PC-3 (cell line): ENCODE measurements at regions of chr14 and their contacts with region 1.

Region 1: DNA sequence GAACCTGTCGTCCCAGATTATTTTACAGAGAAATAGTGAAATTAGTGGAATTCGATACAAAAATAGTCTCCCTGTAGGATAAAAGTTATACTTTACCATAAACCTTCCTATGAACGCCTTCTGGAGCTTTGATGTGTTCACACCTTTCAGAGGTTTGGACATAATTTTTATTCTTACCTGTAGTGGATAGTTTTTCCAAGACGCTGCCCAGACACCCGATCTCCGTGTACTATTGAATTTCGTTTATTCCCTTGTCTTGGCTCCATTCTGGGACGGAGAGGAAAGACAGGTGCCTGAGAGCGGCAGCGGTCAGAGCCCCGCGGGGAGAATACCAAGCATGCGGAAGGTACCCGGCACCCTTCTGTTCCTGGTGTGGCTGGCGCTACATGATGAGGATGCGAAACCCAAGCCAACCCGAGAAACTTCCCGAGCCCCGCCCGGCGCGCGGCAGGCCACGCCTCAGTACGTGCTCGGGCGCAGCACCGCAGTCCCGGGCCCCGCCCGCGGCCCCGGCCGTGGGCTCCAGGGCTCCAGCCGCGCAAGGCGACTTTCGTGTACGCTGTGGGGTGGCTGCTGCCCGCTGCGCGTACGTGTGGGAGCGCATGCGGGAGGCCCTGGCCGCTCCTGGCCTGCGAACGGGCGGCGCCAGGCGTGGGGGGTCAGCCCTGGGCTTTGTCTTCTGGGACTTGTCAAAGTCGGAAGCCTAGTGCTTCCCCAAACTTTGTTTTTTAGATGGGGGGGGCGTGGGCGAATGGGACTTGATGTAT is 11.3 kb upstream of the SNAPC1 start:
- DNase-seq: peak; percentile 99
- ATAC-seq: peak; percentile 79
- H3K4me3 ChIP-seq: peak overlapping the region; percentile 72
- H3K27ac ChIP-seq: peak overlapping the region; percentile 55
- H3K4me1 ChIP-seq: peaks cover 79% of the 10 kb centered on the region
- H3K27me3 ChIP-seq: no peaks in the 10 kb centered on the region
- CTCF ChIP-seq: no peak

Region 2: DNA sequence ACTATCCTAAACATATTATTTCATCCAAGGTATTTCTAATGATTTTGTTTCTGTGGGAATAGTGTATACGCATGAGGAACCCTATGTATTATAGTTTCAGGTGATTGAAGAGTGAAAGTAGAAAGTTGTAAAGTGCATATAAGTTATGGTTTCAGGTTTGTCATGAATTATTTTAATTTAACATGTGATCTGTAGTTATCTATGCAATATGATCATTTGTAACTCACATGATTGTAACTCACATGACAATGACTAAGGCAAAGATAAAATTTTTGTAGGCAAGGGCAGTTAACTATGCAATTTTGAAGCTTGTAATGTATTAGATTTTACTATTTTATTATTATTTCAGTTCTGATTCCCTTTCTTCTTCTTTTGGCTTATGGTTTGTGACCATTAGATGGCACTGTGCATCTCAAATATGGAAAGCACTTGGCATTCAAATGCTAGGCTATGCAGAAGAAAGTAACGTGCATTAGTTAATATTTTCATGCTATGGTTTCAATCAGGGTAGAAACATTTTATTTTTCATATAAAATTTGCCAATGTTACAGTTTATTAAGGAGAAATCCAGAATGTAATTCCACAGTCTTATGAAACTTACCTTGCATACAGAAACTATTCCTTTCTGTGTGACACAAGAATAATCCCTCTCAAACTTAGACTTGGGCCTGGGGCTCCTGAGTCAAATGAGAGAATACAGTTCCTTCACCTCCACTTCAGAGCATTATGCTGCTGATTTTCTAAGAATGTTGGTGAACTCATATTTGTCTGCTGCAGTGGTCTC is 454.0 kb before region 1 on chr14:
- CTCF ChIA-PET with region 1: no interaction called
- POLR2A ChIA-PET with region 1: no interaction called
- intact Hi-C with region 1: loop called (anchors 5 kb)
- DNase-seq: peak; percentile 87
- ATAC-seq: peak; percentile 84
- H3K4me3 ChIP-seq: no peak overlapping the region
- H3K27ac ChIP-seq: no peak overlapping the region
- H3K4me1 ChIP-seq: no peaks in the 10 kb centered on the region
- H3K27me3 ChIP-seq: no peaks in the 10 kb centered on the region
- CTCF ChIP-seq: peak; percentile 96

Region 3: DNA sequence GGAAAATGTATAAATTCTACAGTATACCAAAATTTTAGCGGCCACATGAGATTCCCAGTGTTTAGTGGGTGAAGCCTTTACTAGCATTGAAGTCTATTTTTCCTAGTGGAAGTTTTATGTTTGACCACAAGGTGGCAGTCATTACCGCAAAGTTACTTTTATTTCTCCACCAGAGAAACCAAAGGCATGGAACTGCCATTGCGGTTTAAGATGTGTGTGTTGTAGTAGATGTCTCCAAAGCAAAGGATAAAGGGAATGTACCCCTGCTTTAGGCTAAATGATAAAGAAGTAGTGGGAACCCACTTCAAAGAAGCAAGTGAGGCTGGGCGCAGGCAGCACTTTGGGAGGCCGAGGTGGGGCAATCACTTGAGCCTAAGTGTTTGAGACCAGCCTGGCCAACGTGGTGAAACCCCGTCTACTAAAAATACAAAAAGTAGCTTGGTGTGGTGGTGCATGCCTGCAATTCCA is 289.0 kb before region 1 on chr14:
- CTCF ChIA-PET with region 1: no interaction called
- POLR2A ChIA-PET with region 1: no interaction called
- intact Hi-C with region 1: loop called (anchors 1 kb)
- DNase-seq: peak; percentile 97
- ATAC-seq: peak; percentile 65
- H3K4me3 ChIP-seq: no peak overlapping the region
- H3K27ac ChIP-seq: peak overlapping the region; percentile 76
- H3K4me1 ChIP-seq: peaks cover 46% of the 10 kb centered on the region
- H3K27me3 ChIP-seq: no peaks in the 10 kb centered on the region
- CTCF ChIP-seq: peak; percentile 96

Region 4: DNA sequence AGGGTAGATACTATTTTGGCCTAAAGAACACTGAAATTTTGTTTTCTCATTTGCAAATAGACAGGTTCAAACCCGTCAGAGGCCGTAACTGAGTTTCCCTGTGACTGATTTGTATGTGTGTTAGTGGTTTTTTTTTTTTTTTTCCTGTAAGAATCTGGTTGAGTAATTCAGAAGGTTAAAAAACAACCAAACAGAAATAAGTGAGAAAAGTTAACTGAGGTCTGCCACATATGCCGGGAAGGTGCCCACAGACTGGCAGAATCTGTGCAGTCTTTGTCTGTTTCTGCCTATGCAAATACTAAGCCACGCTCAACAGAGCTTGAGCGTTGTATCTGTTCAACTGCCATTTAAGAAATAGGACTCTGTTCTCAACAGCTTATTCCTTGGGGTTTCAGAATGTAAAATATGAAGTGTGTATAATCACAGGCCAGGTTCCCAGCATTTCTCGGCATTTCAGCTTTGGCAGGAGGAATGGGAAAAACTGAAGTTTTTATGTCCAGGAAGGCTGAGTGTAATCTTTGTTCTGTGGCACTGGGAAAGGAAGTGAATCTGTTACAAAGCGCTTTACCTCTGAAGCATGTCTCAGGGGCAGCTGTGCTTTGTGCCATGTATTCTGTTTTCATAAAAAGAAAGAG is 247.6 kb before region 1 on chr14:
- CTCF ChIA-PET with region 1: no interaction called
- POLR2A ChIA-PET with region 1: no interaction called
- intact Hi-C with region 1: no loop called
- DNase-seq: no peak
- ATAC-seq: no peak
- H3K4me3 ChIP-seq: no peak overlapping the region
- H3K27ac ChIP-seq: no peak overlapping the region
- H3K4me1 ChIP-seq: peaks cover 6% of the 10 kb centered on the region; the same call in 1 of the 2 replicates
- H3K27me3 ChIP-seq: no peaks in the 10 kb centered on the region
- CTCF ChIP-seq: no peak

Region 5: GRCh38 chr14:61694830-61695694 is 55.8 kb before region 1 on chr14 and contains the start of gene HIF1A:
- CTCF ChIA-PET with region 1: no interaction called
- POLR2A ChIA-PET with region 1: interaction called, 7 read pairs
- intact Hi-C with region 1: loop called (anchors 5 kb)
- DNase-seq: peak; percentile 100
- ATAC-seq: peak; percentile 90
- H3K4me3 ChIP-seq: peak within 1 kb of the TSS; percentile 86
- H3K27ac ChIP-seq: peak within 1 kb of the TSS; percentile 81
- H3K4me1 ChIP-seq: peaks cover 34% of the 10 kb centered on the region
- H3K27me3 ChIP-seq: no peaks in the 10 kb centered on the region
- CTCF ChIP-seq: peak; percentile 49
- total RNA-seq, gene HIF1A: 266 and 319 TPM in 2 replicates

Region 6: GRCh38 chr14:61739133-61739532 is 11.8 kb before region 1 on chr14:
- CTCF ChIA-PET with region 1: no interaction called
- POLR2A ChIA-PET with region 1: interaction called, 10 read pairs
- intact Hi-C with region 1: no loop called
- DNase-seq: no peak
- ATAC-seq: no peak
- H3K4me3 ChIP-seq: no peak overlapping the region
- H3K27ac ChIP-seq: no peak overlapping the region
- H3K4me1 ChIP-seq: peaks cover 8% of the 10 kb centered on the region
- H3K27me3 ChIP-seq: no peaks in the 10 kb centered on the region
- CTCF ChIP-seq: no peak

Region 7: GRCh38 chr14:61812761-61813606 is 62.1 kb after region 1 on chr14:
- CTCF ChIA-PET with region 1: no interaction called
- POLR2A ChIA-PET with region 1: no interaction called
- intact Hi-C with region 1: no loop called
- DNase-seq: no peak
- ATAC-seq: peak; percentile 58
- H3K4me3 ChIP-seq: peak overlapping the region; percentile 62
- H3K27ac ChIP-seq: no peak overlapping the region
- H3K4me1 ChIP-seq: peaks cover 4% of the 10 kb centered on the region; the same call in 1 of the 2 replicates
- H3K27me3 ChIP-seq: peaks cover 39% of the 10 kb centered on the region
- CTCF ChIP-seq: no peak

Region 8: GRCh38 chr14:61997161-61997560 is 246.3 kb after region 1 on chr14:
- CTCF ChIA-PET with region 1: no interaction called
- POLR2A ChIA-PET with region 1: no interaction called
- intact Hi-C with region 1: no loop called
- DNase-seq: peak; percentile 50
- ATAC-seq: no peak; the same call in 1 of the 2 replicates
- H3K4me3 ChIP-seq: no peak overlapping the region
- H3K27ac ChIP-seq: peak overlapping the region; percentile 4
- H3K4me1 ChIP-seq: peaks cover 31% of the 10 kb centered on the region
- H3K27me3 ChIP-seq: no peaks in the 10 kb centered on the region
- CTCF ChIP-seq: no peak

Region 9: GRCh38 chr14:62079038-62079437 is 328.1 kb after region 1 on chr14:
- CTCF ChIA-PET with region 1: no interaction called
- POLR2A ChIA-PET with region 1: no interaction called
- intact Hi-C with region 1: no loop called
- DNase-seq: no peak
- ATAC-seq: no peak
- H3K4me3 ChIP-seq: no peak overlapping the region
- H3K27ac ChIP-seq: no peak overlapping the region
- H3K4me1 ChIP-seq: no peaks in the 10 kb centered on the region
- H3K27me3 ChIP-seq: no peaks in the 10 kb centered on the region
- CTCF ChIP-seq: no peak

Region 10: DNA sequence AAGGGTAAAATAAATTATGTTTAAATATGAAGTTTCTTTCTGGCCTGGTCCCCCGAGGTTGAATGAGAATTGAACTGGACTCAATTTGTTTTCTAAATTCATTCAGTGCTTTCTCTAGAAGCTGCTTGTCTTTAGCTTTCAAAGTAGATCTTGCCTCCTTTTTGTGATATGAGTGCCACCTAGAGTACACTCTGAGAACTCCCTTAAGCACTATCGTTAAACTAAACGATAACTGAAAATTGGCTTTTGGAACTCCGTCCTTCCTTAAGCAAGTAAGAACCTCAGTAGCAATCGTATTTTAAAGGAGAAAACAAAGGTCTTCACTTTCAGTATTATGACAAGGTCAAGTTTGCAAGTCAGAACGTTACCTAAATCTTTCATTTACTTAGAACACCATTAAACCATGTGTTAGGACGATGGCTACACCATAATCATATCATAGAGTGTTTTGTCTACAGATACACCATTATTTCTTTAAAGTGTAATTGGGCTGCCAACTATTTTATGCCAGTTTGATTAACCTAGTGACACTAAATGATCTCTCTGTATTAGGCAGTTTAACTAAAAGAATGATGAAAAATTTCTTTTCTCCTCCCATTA is 376.1 kb after region 1 on chr14:
- CTCF ChIA-PET with region 1: interaction called, 3 read pairs
- POLR2A ChIA-PET with region 1: no interaction called
- intact Hi-C with region 1: loop called (anchors 5 kb)
- DNase-seq: peak; percentile 85
- ATAC-seq: peak; percentile 88
- H3K4me3 ChIP-seq: no peak overlapping the region
- H3K27ac ChIP-seq: peak overlapping the region; percentile 15; the same call in 1 of the 2 replicates
- H3K4me1 ChIP-seq: peaks cover 5% of the 10 kb centered on the region; the same call in 1 of the 2 replicates
- H3K27me3 ChIP-seq: no peaks in the 10 kb centered on the region
- CTCF ChIP-seq: peak; percentile 94